Activated naive CD4-positive, alpha-beta T cell treated with anti-CD3 and anti-CD28 coated beads for 36 hours (primary cell): ENCODE measurements at regions of chr4 and their contacts with region 1.

Region 1: DNA sequence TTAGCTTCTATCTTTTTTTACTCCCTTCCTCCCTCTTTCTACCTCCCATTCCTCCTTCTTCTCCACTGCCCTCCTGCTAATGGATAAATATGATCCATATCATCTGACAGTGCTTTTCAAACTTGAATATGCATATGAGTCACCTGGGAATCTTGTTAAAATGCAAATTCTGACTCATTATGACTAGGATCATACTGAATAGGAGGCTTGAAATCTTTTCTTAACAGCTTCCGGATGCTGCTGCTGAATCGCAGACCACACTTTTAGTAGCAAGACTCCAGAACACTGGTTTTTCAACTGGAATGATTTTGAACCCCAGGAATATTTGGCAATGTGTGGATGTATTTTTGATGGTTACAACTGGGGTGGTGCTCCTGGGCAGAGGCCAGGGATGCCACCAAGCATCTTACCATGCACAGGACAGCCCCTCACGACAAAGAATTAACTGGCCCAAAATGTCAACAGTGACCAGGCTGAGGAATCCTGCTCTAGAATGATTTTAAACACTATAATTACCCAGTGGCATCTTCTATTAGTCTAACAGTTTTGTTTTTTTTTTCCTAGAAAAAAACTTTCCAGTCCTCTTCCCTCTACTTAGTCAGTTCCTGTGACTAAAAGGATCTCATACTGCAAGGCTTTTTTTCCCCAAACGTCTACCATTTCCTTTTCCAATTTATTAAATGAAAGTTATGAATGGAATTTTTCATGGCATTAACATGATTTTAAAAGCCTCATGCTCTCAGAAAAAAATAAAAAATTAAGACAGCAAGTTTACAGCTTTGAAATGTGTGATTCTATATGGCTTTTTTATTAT is 10.6 kb upstream of the PYURF start:
- DNase-seq: no peak
- H3K4me3 Mint-ChIP-seq: no peak overlapping the region
- H3K27ac Mint-ChIP-seq: no peak overlapping the region
- H3K4me1 Mint-ChIP-seq: peaks cover 27% of the 10 kb centered on the region
- H3K27me3 Mint-ChIP-seq: no peaks in the 10 kb centered on the region

Region 2: DNA sequence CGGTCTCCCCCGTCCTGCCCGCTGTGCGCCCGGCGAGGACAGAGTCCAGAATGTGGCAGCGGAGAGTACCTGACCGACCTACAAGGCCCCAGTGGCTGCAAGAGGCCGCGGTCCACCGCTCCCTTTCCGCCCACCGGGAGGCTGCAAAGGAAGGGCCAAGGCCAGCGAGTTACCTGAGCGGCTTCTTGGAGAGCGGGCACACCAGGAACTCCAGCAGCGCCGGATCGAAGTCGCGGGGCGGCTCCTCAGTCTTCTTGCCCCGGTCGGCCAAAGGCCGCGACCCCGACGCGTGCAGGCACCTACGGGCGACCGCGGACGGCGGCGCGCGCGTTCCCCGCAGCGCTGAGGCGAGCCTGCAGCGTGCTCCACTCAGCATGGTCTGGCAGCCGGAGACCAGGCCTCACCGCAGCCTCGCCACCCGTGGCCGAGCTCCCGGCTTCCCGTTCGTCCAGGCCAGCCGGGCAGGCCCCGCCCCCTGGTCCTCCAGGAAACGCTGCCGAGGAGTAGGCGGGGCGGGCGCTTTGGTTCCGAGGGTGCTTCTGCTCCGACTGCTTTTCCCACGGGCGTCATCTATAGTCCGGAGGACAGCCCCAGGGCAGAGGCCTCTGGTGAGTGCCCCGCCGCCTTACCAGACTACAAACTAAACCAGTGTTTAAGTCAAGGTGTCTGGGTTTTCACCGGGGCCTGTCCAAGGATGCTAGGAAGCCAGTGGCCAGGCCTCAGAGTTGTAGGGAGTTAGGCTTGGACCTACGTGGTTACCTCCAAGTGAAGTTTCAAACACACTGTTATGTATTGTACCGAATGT is 10.6 kb before region 1 on chr4 and contains the start of gene PYURF:
- CTCF ChIA-PET with region 1: interaction called, 11 read pairs
- intact Hi-C with region 1: loop called (anchors 1 kb)
- DNase-seq: peak; percentile 85
- H3K4me3 Mint-ChIP-seq: peak within 1 kb of the TSS; percentile 92
- H3K27ac Mint-ChIP-seq: peak within 1 kb of the TSS; percentile 91
- H3K4me1 Mint-ChIP-seq: peaks cover 40% of the 10 kb centered on the region
- H3K27me3 Mint-ChIP-seq: no peaks in the 10 kb centered on the region
- total RNA-seq, gene PYURF: 51.5 to 54.2 TPM

Region 3: GRCh38 chr4:88613417-88613875 is 79.3 kb after region 1 on chr4:
- CTCF ChIA-PET with region 1: interaction called, 17 read pairs
- intact Hi-C with region 1: loop called (anchors 2 kb)
- DNase-seq: peak; percentile 62
- H3K4me3 Mint-ChIP-seq: peak overlapping the region; percentile 64
- H3K27ac Mint-ChIP-seq: peak overlapping the region; percentile 92
- H3K4me1 Mint-ChIP-seq: peaks cover 82% of the 10 kb centered on the region
- H3K27me3 Mint-ChIP-seq: no peaks in the 10 kb centered on the region

Region 4: DNA sequence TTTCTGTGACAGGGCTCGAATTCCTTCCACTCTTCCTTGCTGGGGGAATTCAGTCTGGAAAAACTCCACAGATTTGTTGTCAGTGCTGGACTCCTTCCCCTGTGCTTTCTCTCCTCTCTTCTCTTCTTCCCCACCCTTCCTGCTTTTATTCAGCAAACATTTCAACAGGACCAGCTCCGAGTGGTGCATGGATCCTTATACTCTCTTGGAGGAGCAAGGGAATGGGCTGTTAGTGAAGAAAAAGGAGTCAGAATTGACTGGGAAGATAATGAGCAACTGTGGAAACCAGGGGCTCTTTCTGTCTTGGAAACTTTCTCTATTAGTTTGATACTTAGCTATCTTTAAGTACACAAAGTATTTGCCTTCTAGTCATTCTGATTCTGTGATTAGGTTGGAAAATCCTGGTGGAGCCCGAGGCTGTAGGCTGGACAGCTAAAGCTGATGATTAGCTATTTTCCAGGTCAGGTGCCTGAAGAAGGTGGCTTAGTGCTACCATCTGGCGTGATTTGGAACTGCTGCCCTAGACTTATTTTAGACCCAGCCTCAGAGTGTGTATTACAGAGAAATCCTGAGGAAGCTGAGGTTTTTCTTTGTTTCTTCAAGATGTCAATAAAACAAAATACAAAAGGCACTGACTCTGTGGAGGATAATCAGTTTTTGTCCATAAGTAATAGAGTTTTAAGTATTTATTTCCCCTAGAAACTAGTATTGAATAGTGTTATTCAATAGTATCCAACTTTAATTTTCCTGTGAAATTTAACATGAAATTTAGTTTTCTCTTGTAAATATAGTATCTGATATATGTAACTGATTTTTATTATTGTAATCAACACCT is 125.1 kb after region 1 on chr4:
- CTCF ChIA-PET with region 1: interaction called, 94 read pairs
- intact Hi-C with region 1: loop called (anchors 1 kb)
- DNase-seq: peak; percentile 69
- H3K4me3 Mint-ChIP-seq: no peak overlapping the region
- H3K27ac Mint-ChIP-seq: no peak overlapping the region
- H3K4me1 Mint-ChIP-seq: peaks cover 6% of the 10 kb centered on the region
- H3K27me3 Mint-ChIP-seq: no peaks in the 10 kb centered on the region

Region 5: DNA sequence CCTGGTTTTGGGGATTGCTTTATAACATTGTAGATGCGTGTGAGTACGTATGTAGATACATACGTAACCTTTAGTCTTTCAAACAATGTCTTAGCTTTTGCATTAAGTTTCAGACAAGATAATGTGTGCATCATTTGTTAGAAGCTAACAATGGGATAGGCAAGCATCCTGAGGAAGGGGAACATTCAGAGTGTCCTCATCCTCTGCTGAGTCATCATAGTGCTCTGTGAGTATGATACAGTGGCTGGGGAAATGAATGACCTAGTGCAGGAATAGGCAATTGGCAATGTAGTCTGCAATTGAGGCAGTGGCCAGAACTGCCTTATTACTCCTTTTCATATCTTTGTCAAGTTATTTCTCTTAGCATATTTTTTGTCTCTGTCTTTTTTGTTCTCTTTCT is 156.2 kb after region 1 on chr4:
- CTCF ChIA-PET with region 1: interaction called, 10 read pairs
- intact Hi-C with region 1: no loop called
- DNase-seq: no peak
- H3K4me3 Mint-ChIP-seq: no peak overlapping the region
- H3K27ac Mint-ChIP-seq: no peak overlapping the region
- H3K4me1 Mint-ChIP-seq: no peaks in the 10 kb centered on the region
- H3K27me3 Mint-ChIP-seq: no peaks in the 10 kb centered on the region

Region 6: GRCh38 chr4:88803600-88804096 is 269.5 kb after region 1 on chr4:
- CTCF ChIA-PET with region 1: interaction called, 3 read pairs
- intact Hi-C with region 1: loop called (anchors 1 kb)
- DNase-seq: peak; percentile 60
- H3K4me3 Mint-ChIP-seq: no peak overlapping the region
- H3K27ac Mint-ChIP-seq: no peak overlapping the region
- H3K4me1 Mint-ChIP-seq: peaks cover 22% of the 10 kb centered on the region
- H3K27me3 Mint-ChIP-seq: no peaks in the 10 kb centered on the region

Region 7: GRCh38 chr4:89055157-89056080 is 521.3 kb after region 1 on chr4:
- CTCF ChIA-PET with region 1: no interaction called
- intact Hi-C with region 1: loop called (anchors 1 kb)
- DNase-seq: no peak
- H3K4me3 Mint-ChIP-seq: no peak overlapping the region
- H3K27ac Mint-ChIP-seq: no peak overlapping the region
- H3K4me1 Mint-ChIP-seq: peaks cover 32% of the 10 kb centered on the region
- H3K27me3 Mint-ChIP-seq: peaks cover 7% of the 10 kb centered on the region